Colonic mucosa (tissue), 4 donors: ENCODE measurements at regions of chr9 and their contacts with region 1.

Region 1: GRCh38 chr9:131739980-131740648 is at the start of gene RAPGEF1:
- DNase-seq: peak; percentile 71
- H3K4me3 ChIP-seq: peak within 1 kb of the TSS; percentile 61
- H3K27ac ChIP-seq: peak within 1 kb of the TSS; percentile 83
- H3K4me1 ChIP-seq: peaks cover 14% of the 10 kb centered on the region
- H3K27me3 ChIP-seq: no peaks in the 10 kb centered on the region
- CTCF ChIP-seq: peak; percentile 65
- total RNA-seq, gene RAPGEF1: 47.2 to 58.6 TPM

Region 2: DNA sequence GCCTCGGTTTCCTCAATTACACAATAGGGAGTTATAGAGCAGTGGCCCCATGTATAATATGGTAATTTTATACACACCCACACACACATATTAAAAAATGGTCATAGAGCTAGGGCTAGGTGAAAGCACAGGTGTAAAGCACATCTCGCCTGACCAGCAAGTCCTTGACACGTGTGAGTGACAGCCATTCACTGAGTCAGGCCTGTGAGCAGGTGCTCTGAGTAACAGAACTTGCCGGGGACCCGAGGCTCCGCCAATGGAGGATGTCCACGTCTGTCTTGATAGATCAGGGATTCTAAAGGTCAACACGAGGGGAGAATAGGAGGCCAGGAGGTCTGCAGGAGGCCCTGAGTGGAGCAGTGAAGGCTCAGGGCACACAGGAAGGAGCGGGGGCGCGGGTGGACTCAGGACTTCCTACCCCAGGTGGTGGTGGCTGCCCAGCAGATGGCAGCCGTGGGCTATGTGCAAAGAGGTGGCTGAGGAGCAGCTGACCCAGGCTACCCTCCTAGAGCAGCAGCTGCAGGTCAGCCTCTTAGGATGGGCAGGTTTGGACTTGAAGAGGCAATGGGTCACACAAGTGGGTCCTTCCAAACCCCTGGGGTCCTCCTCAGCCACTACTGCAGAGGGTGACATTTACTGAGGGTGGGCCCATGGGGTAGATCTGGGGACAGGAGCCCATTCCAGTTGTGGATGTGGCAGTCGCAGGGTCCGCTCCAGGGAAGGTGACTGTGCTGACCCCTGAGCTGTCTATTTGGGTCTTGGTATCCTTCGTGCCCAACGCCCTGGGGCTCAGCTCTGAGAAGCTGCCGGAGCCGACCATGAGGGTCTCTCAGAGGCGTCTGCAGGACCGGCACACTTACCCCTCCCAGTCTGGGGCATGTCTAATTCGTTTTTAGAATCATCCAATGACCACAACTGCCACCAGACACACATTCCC is 148.9 kb before region 1 on chr9:
- intact Hi-C with region 1: loop called (anchors 1 kb)
- DNase-seq: peak; percentile 72
- H3K4me3 ChIP-seq: no peak overlapping the region
- H3K27ac ChIP-seq: no peak overlapping the region
- H3K4me1 ChIP-seq: no peaks in the 10 kb centered on the region
- H3K27me3 ChIP-seq: no peaks in the 10 kb centered on the region
- CTCF ChIP-seq: peak; percentile 80

Region 3: DNA sequence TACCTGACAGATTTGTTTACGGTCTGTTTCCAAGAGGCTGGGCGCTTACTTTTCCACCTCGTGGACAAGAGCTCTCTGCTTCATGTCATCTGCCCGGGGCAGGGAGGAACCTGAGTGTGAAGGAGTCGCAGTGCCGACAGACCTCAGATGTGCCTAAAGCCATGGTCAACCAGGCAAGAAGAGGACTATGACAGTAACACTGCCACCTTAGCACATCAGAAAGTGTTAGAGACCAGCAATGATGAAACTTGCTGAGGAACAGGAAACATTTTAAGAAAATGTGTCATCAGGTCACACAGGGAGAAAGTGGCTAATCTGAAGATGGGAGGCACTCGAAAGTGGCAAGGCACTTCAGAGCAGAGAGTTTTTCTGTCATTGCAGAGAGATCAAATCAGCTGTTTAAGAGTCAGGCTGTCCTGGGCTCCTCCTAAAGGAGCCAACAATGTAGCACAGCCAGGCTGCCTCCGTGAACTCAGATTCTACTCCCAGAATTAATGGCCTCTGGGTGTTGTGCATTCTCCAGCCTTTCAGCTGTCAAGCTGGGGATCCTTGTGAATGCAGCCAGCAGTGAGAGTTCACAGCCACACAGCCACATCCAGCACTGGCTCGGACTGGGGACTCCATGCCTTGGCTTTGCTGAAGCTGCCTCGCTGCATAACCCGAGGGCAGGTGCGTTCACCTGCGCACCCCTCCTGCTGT is 94.9 kb before region 1 on chr9:
- intact Hi-C with region 1: loop called (anchors 10 kb)
- DNase-seq: no peak
- H3K4me3 ChIP-seq: no peak overlapping the region
- H3K27ac ChIP-seq: no peak overlapping the region
- H3K4me1 ChIP-seq: peaks cover 22% of the 10 kb centered on the region
- H3K27me3 ChIP-seq: no peaks in the 10 kb centered on the region
- CTCF ChIP-seq: no peak